ENCODE measurements at regions of chr1 and their contacts with region 1.

Region 1: GRCh38 chr1:15021065-15021745 is 132.3 kb upstream of the TMEM51 start:
- DNase-seq: peak; percentile 43 to 72
- ATAC-seq: peak; percentile 69 to 93 (median 84)
- H3K4me3 ChIP-seq: no peak overlapping the region
- H3K27ac ChIP-seq: peak overlapping the region in 7 of 10 donors; percentile 31 to 58 (median 50)
- H3K4me1 ChIP-seq: peaks cover 0 to 37% (median 9%) of the 10 kb centered on the region in 9 donors
- H3K27me3 ChIP-seq: no peaks in the 10 kb centered on the region
- CTCF ChIP-seq: peak in 1 of 9 donors; percentile 2

Region 2: GRCh38 chr1:14923727-14924452 is 97.3 kb before region 1 on chr1:
- intact Hi-C with region 1: loop called in 9 of 10 experiments (anchors 2 to 5 kb)
- DNase-seq: peak; percentile 65 to 73
- ATAC-seq: peak; percentile 62 to 82 (median 71)
- H3K4me3 ChIP-seq: peak overlapping the region in 6 of 10 donors; percentile 21 to 93 (median 46)
- H3K27ac ChIP-seq: peak overlapping the region in 6 of 10 donors; percentile 5 to 54 (median 39)
- H3K4me1 ChIP-seq: peaks cover 8 to 29% (median 13%) of the 10 kb centered on the region in 9 donors
- H3K27me3 ChIP-seq: peaks cover 0 to 42% (median 7%) of the 10 kb centered on the region in 7 donors
- CTCF ChIP-seq: no peak

Region 3: DNA sequence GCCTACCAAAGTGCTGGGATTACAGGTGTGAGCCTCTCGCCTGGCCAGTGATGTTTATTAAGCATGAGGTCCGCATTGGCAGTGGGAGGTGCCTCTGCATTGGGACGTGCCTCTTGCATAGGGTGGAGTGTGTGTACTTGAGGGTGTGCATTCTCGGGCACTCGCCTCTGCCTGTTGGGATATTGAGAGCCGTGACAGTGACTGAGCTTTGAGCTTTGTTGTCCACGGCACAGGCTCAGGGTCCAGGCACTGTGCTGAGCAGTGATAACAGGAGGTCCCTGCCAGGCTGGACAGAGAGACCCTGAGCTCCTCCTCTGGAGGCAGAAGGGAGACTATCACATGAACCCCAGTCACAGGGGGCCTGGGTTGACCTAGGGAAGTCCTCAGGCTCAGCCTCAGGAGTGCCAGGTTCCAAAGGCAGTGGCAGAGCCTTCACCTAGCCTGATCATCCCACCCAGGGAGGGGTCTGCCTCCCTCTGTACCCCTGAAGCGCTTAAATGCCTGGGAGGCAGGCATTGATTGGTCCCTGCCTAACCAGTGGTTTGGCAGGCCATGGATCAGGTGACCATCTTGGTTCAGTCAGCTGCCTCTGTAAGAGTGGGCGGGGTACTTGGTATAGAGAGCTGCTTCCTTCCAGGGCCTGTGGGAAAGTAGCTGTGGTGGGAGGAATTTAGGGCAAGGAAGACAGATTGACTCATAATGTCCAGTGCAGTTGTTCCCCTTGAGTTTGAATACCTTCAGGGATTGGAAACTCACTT is 81.5 kb before region 1 on chr1:
- intact Hi-C with region 1: loop called in 1 of 10 experiments (anchors 5 kb)
- DNase-seq: no peak
- ATAC-seq: peak in 5 of 8 donors; percentile 10 to 48 (median 40)
- H3K4me3 ChIP-seq: no peak overlapping the region
- H3K27ac ChIP-seq: peak overlapping the region in 4 of 10 donors; percentile 13 to 56 (median 44)
- H3K4me1 ChIP-seq: peaks cover under 1 to 42% (median 22%) of the 10 kb centered on the region in 9 donors
- H3K27me3 ChIP-seq: no peaks in the 10 kb centered on the region
- CTCF ChIP-seq: no peak